HepG2 (cell line): ENCODE measurements at regions of chr9 and their contacts with region 1.

Region 1: GRCh38 chr9:109817846-109818472 is 38.0 kb downstream of the PALM2AKAP2 start:
- DNase-seq: peak; percentile 83
- ATAC-seq: peak; percentile 74
- H3K4me3 ChIP-seq: no peak overlapping the region
- H3K27ac ChIP-seq: no peak overlapping the region
- H3K4me1 ChIP-seq: peaks cover 23% of the 10 kb centered on the region
- H3K27me3 ChIP-seq: no peaks in the 10 kb centered on the region
- CTCF ChIP-seq: peak; percentile 82
- EP300 ChIP-seq: no peak
- POLR2A ChIP-seq: no peak
- RAD21 ChIP-seq: peak; percentile 56; the same call in 1 of the 2 replicates

Region 2: GRCh38 chr9:109574068-109574882 is 243.7 kb before region 1 on chr9:
- CTCF ChIA-PET with region 1: interaction called, 22 read pairs
- POLR2A ChIA-PET with region 1: no interaction called
- in situ Hi-C with region 1: loop called (anchors 5 kb)
- intact Hi-C with region 1: loop called (anchors 1 kb)
- DNase-seq: peak; percentile 36
- ATAC-seq: peak; percentile 66
- H3K4me3 ChIP-seq: no peak overlapping the region
- H3K27ac ChIP-seq: no peak overlapping the region
- H3K4me1 ChIP-seq: no peaks in the 10 kb centered on the region
- H3K27me3 ChIP-seq: no peaks in the 10 kb centered on the region
- CTCF ChIP-seq: peak; percentile 69
- EP300 ChIP-seq: no peak
- POLR2A ChIP-seq: no peak
- RAD21 ChIP-seq: peak; percentile 46; the same call in 1 of the 2 replicates

Region 3: GRCh38 chr9:109579191-109579948 is 238.6 kb before region 1 on chr9:
- CTCF ChIA-PET with region 1: interaction called, 22 read pairs
- POLR2A ChIA-PET with region 1: no interaction called
- in situ Hi-C with region 1: loop called (anchors 5 kb)
- intact Hi-C with region 1: loop called (anchors 1 kb)
- DNase-seq: no peak
- ATAC-seq: no peak
- H3K4me3 ChIP-seq: no peak overlapping the region
- H3K27ac ChIP-seq: no peak overlapping the region
- H3K4me1 ChIP-seq: no peaks in the 10 kb centered on the region
- H3K27me3 ChIP-seq: no peaks in the 10 kb centered on the region
- CTCF ChIP-seq: no peak
- EP300 ChIP-seq: no peak
- POLR2A ChIP-seq: no peak
- RAD21 ChIP-seq: no peak

Region 4: DNA sequence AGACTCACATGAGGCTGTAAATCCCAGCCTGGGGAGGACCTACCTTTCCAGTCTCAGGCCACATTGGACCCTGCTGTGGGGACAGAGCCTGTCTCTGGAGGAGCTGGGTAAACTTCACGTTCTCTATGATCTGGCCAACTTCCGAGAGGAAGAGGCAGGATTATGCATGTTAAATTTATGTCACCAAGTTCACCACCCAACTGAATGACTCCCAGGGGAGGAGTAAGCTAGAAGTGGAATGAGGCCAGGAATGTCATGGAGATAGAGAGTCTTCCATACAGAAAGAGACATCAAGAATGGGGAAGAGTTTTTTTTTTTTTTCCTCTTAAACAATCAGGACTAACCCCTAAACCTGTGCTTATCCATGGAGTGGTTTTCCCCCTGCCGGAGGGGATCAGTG is 128.3 kb before region 1 on chr9:
- CTCF ChIA-PET with region 1: no interaction called
- POLR2A ChIA-PET with region 1: no interaction called
- in situ Hi-C with region 1: no loop called
- intact Hi-C with region 1: no loop called
- DNase-seq: no peak
- ATAC-seq: no peak
- H3K4me3 ChIP-seq: no peak overlapping the region
- H3K27ac ChIP-seq: no peak overlapping the region
- H3K4me1 ChIP-seq: no peaks in the 10 kb centered on the region
- H3K27me3 ChIP-seq: no peaks in the 10 kb centered on the region
- CTCF ChIP-seq: no peak
- EP300 ChIP-seq: no peak
- POLR2A ChIP-seq: no peak
- RAD21 ChIP-seq: no peak

Region 5: GRCh38 chr9:109745335-109746283 is 72.3 kb before region 1 on chr9:
- CTCF ChIA-PET with region 1: no interaction called
- POLR2A ChIA-PET with region 1: no interaction called
- in situ Hi-C with region 1: no loop called
- intact Hi-C with region 1: loop called (anchors 10 kb)
- DNase-seq: no peak
- ATAC-seq: no peak
- H3K4me3 ChIP-seq: no peak overlapping the region
- H3K27ac ChIP-seq: no peak overlapping the region
- H3K4me1 ChIP-seq: peaks cover 3% of the 10 kb centered on the region; the same call in 1 of the 2 replicates
- H3K27me3 ChIP-seq: no peaks in the 10 kb centered on the region
- CTCF ChIP-seq: no peak
- EP300 ChIP-seq: no peak
- POLR2A ChIP-seq: no peak
- RAD21 ChIP-seq: no peak

Region 6: GRCh38 chr9:110058304-110058953 is 240.5 kb after region 1 on chr9:
- CTCF ChIA-PET with region 1: no interaction called
- POLR2A ChIA-PET with region 1: no interaction called
- in situ Hi-C with region 1: no loop called
- intact Hi-C with region 1: loop called (anchors 5 kb)
- DNase-seq: peak; percentile 53
- ATAC-seq: peak; percentile 90
- H3K4me3 ChIP-seq: no peak overlapping the region
- H3K27ac ChIP-seq: no peak overlapping the region
- H3K4me1 ChIP-seq: peaks cover 19% of the 10 kb centered on the region; the same call in 1 of the 2 replicates
- H3K27me3 ChIP-seq: no peaks in the 10 kb centered on the region
- CTCF ChIP-seq: peak; percentile 92
- EP300 ChIP-seq: no peak
- POLR2A ChIP-seq: no peak
- RAD21 ChIP-seq: peak; percentile 82

Region 7: DNA sequence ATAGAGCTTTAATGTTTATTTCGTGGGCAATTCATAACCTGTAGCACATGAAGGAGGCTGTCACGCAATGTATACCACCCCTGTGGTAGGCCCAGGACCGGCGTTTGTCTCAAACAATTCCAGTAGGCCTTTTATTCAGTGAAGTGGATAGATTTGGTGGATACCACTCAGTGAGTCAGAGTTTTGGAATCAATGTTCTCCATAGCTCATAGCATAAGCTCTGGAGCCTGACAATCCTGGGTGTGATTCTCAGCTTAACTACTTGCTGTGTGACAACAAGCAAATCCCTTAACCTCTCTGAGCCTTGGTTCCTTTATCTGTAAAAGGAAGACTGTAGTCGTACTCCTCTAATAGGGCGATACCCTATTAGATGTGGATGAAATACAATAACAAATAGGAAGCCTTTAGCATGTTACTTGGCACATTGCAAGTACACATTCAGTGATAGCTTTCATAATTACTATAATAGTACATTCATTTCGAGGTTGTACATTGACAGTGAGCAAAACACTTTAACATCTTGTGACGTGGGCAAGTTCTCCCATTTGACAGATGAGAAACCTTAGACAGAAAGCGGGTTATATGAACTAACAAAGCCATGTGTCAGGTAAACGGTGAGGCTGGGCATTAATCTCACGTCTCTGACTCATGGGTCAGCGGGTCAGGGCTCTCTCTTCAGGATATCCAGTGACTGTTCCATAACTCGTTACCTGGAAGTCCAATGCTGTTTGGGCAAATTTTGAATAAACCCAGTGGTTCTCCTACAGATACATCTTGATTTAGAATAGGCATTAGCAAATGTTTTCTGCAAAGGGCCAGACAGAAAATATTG is 259.2 kb after region 1 on chr9:
- CTCF ChIA-PET with region 1: no interaction called
- POLR2A ChIA-PET with region 1: no interaction called
- in situ Hi-C with region 1: no loop called
- intact Hi-C with region 1: no loop called
- DNase-seq: no peak
- ATAC-seq: no peak
- H3K4me3 ChIP-seq: no peak overlapping the region
- H3K27ac ChIP-seq: no peak overlapping the region
- H3K4me1 ChIP-seq: peaks cover 10% of the 10 kb centered on the region; the same call in 1 of the 2 replicates
- H3K27me3 ChIP-seq: no peaks in the 10 kb centered on the region
- CTCF ChIP-seq: no peak
- EP300 ChIP-seq: no peak
- POLR2A ChIP-seq: no peak
- RAD21 ChIP-seq: no peak